Naive thymus-derived CD4-positive, alpha-beta T cell (primary cell): ENCODE measurements at regions of chr1 and their contacts with region 1.

Region 1: DNA sequence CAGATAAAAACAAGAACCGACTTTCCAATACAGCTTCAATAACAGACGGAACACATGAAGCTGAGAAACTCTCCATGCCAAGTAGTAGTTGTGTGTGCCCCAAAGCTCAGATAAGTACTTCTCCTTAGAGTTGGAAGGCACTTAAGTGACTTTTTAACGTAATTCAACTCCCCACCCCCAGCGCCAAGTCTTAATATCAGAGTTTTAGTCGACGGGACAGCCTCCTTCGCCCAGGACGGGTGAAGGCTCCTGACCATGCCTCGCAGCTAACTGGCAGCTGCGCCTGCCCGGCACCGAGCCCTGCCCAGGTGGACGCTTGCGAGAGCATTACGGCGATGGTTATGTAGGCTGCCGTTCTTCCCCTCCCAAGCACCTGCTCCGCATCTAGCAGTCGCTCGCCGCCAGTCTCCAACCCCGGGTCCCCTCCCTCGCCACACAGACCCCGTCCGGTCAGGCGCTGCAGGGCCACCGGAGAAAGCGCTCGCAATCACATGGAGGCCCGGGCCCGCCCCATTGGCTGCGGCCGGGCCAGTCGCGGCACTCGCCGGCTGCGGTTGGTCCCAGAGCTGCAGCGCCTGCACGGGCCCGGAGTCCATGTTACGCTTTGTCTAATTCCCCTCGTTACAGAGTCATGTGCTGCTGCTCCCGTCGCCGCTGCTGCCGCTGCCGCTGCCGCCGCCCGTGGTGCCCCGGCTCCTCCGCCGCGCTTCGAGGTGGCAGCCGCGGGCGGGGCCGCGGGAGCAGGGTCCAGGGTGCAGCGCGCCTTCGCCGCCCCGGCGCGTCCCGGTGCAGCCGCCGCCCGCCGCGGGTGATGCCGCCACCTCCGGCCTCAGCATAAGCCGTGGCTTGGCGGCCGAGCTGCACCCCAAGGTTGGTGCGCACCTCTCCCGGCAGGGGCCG is at the start of gene LRRC8D:
- DNase-seq: peak; percentile 46 to 80 (median 57)
- ATAC-seq: peak; percentile 84
- H3K4me3 ChIP-seq: peak within 1 kb of the TSS; percentile 84
- H3K4me3 Mint-ChIP-seq: peak within 1 kb of the TSS; percentile 85 to 97 (median 89)
- H3K27ac ChIP-seq: peak within 1 kb of the TSS; percentile 66
- H3K27ac Mint-ChIP-seq: peak within 1 kb of the TSS; percentile 67 to 92 (median 81)
- H3K4me1 ChIP-seq: peaks cover 7 to 14% of the 10 kb centered on the region in 2 donors
- H3K4me1 Mint-ChIP-seq: peaks cover 20 to 44% (median 36%) of the 10 kb centered on the region in 7 donors
- H3K27me3 ChIP-seq: no peaks in the 10 kb centered on the region
- H3K27me3 Mint-ChIP-seq: peaks cover 0 to 20% (median 0%) of the 10 kb centered on the region in 5 donors
- total RNA-seq, gene LRRC8D: 21.1 to 42.6 (median 37.3) TPM

Region 2: DNA sequence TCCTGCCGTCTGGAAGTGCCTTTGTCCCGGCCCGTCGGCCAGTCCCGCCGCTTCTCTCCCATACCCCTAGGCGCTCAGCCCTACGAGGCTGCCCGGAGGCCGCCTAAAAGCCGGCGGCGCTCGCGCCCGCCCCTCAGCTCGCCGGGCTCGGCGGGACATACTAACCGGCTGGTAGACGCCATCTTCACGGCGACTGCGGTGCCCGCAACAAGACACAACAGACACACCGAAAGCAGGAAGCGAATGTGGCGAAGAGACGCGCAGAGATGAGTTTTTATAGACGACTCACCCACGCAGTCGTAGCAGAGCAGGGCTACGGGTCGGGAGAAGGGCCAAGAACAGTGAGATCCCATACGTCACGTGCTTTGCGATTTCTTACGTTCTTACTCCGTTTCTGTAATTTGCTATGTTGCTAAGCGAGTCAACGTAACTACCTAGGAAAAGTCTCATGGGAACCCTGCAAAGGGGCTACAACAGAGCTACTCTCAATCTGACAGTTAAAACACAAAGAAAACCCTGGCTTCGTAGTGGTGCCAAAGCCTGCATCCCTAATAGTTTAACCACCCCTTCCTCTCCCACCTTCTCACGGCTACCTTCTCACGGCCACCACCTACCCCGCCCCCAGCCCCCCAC is 929.2 kb before region 1 on chr1 and contains the start of gene GTF2B:
- CTCF ChIA-PET with region 1: no interaction called
- POLR2A ChIA-PET with region 1: interaction called, 3 read pairs
- intact Hi-C with region 1: loop called in 1 of 2 experiments (anchors 5 kb)
- DNase-seq: peak; percentile 86 to 96 (median 94)
- ATAC-seq: peak; percentile 97
- H3K4me3 ChIP-seq: peak within 1 kb of the TSS; percentile 86
- H3K4me3 Mint-ChIP-seq: peak within 1 kb of the TSS; percentile 87 to 99 (median 95)
- H3K27ac ChIP-seq: peak within 1 kb of the TSS; percentile 91
- H3K27ac Mint-ChIP-seq: peak within 1 kb of the TSS; percentile 93 to 98 (median 97)
- H3K4me1 ChIP-seq: peaks cover 26 to 27% of the 10 kb centered on the region in 2 donors
- H3K4me1 Mint-ChIP-seq: peaks cover 23 to 59% (median 48%) of the 10 kb centered on the region in 7 donors
- H3K27me3 ChIP-seq: no peaks in the 10 kb centered on the region
- H3K27me3 Mint-ChIP-seq: peaks cover 0 to 2% (median 0%) of the 10 kb centered on the region in 5 donors
- total RNA-seq, gene GTF2B: 41.3 to 53.6 (median 47.3) TPM

Region 3: GRCh38 chr1:89804642-89805237 is 15.9 kb before region 1 on chr1:
- CTCF ChIA-PET with region 1: no interaction called
- POLR2A ChIA-PET with region 1: interaction called, 3 read pairs
- intact Hi-C with region 1: loop called in 1 of 2 experiments (anchors 1 kb)
- DNase-seq: peak; percentile 64 to 83 (median 80)
- ATAC-seq: peak; percentile 98
- H3K4me3 ChIP-seq: no peak overlapping the region
- H3K4me3 Mint-ChIP-seq: no peak overlapping the region
- H3K27ac ChIP-seq: no peak overlapping the region
- H3K27ac Mint-ChIP-seq: no peak overlapping the region
- H3K4me1 ChIP-seq: no peaks in the 10 kb centered on the region
- H3K4me1 Mint-ChIP-seq: peaks cover 0 to 6% (median 0%) of the 10 kb centered on the region in 7 donors
- H3K27me3 ChIP-seq: no peaks in the 10 kb centered on the region
- H3K27me3 Mint-ChIP-seq: peaks cover 0 to 7% (median 0%) of the 10 kb centered on the region in 5 donors

Region 4: GRCh38 chr1:89855413-89856123 is 34.9 kb after region 1 on chr1:
- CTCF ChIA-PET with region 1: no interaction called
- POLR2A ChIA-PET with region 1: no interaction called
- intact Hi-C with region 1: loop called in 1 of 2 experiments (anchors 5 kb)
- DNase-seq: peak in 7 of 9 donors; percentile 45 to 80 (median 67)
- ATAC-seq: peak; percentile 91
- H3K4me3 ChIP-seq: peak overlapping the region; percentile 2
- H3K4me3 Mint-ChIP-seq: peak overlapping the region in 5 of 10 donors; percentile 35 to 87 (median 53)
- H3K27ac ChIP-seq: peak overlapping the region; percentile 72
- H3K27ac Mint-ChIP-seq: no peak overlapping the region
- H3K4me1 ChIP-seq: peaks cover 21 to 29% of the 10 kb centered on the region in 2 donors
- H3K4me1 Mint-ChIP-seq: peaks cover 6 to 31% (median 8%) of the 10 kb centered on the region in 7 donors
- H3K27me3 ChIP-seq: no peaks in the 10 kb centered on the region
- H3K27me3 Mint-ChIP-seq: no peaks in the 10 kb centered on the region

Region 5: DNA sequence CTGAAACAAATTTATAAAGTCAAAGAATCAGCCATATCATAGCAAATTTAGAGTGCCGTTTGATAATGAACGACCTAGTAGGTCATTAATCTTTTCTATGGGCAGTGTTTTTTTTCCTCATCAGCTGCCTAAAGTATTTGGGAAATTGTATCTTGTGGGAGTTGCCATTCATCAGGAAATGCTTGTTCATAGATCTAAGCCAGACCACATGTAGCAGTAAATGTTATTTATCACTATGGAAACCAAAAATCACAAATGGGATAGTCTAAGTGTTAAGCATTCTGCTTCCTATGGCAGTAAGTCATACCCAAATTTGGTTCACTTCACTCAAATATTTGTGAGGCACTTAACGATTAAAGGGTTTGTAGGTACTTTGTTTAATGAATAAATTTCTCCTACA is 53.1 kb after region 1 on chr1:
- CTCF ChIA-PET with region 1: no interaction called
- POLR2A ChIA-PET with region 1: interaction called, 3 read pairs
- intact Hi-C with region 1: loop called in 1 of 2 experiments (anchors 2 kb)
- DNase-seq: peak in 2 of 9 donors; percentile 32 to 33
- ATAC-seq: peak; percentile 49
- H3K4me3 ChIP-seq: no peak overlapping the region
- H3K4me3 Mint-ChIP-seq: peak overlapping the region in 1 of 10 donors; percentile 26
- H3K27ac ChIP-seq: no peak overlapping the region
- H3K27ac Mint-ChIP-seq: peak overlapping the region in 5 of 9 donors; percentile 11 to 84 (median 73)
- H3K4me1 ChIP-seq: peaks cover 5 to 21% of the 10 kb centered on the region in 2 donors
- H3K4me1 Mint-ChIP-seq: peaks cover 27 to 89% (median 73%) of the 10 kb centered on the region in 7 donors
- H3K27me3 ChIP-seq: no peaks in the 10 kb centered on the region
- H3K27me3 Mint-ChIP-seq: no peaks in the 10 kb centered on the region

Region 6: DNA sequence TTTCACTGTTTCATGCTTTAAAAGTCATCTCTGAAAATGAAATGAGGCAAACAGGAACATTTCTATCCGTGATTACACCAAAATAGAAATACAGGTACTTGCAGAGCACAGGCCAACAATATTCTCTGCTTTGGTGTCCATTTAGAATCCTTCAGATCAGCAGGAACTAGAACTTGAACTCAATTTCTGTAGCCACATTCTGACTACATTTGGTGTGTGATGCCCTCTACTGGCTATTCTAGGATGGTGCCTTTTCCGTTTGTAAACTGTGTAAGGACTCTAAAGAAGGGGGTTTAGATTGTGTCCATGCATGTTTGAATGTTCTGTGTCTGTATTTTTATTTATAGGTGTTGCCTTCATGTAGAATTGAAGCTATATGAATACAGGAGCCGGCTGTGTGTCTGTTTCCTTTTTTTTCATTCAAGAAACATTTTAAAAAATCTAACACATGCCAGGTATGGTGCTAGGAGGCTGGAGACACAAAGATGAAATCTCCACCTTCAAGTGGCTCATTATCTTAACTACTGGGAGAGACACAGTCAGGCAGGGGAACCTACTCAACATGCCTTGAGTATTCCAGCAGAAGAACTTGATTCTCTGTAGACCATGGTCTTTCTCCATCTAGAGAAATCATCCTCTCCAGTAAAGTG is 166.6 kb after region 1 on chr1:
- CTCF ChIA-PET with region 1: interaction called, 4 read pairs
- POLR2A ChIA-PET with region 1: interaction called, 5 read pairs
- intact Hi-C with region 1: loop called in 1 of 2 experiments (anchors 1 kb)
- DNase-seq: peak in 8 of 9 donors; percentile 48 to 76 (median 70)
- ATAC-seq: peak; percentile 97
- H3K4me3 ChIP-seq: no peak overlapping the region
- H3K4me3 Mint-ChIP-seq: no peak overlapping the region
- H3K27ac ChIP-seq: no peak overlapping the region
- H3K27ac Mint-ChIP-seq: no peak overlapping the region
- H3K4me1 ChIP-seq: no peaks in the 10 kb centered on the region
- H3K4me1 Mint-ChIP-seq: no peaks in the 10 kb centered on the region
- H3K27me3 ChIP-seq: no peaks in the 10 kb centered on the region
- H3K27me3 Mint-ChIP-seq: peaks cover 0 to 13% (median 4%) of the 10 kb centered on the region in 5 donors

Region 7: GRCh38 chr1:89994805-89995597 is 174.3 kb after region 1 on chr1 and contains the start of gene ZNF326:
- CTCF ChIA-PET with region 1: no interaction called
- POLR2A ChIA-PET with region 1: no interaction called
- intact Hi-C with region 1: loop called (anchors 1 kb)
- DNase-seq: peak; percentile 88 to 99 (median 93)
- ATAC-seq: peak; percentile 98
- H3K4me3 ChIP-seq: peak within 1 kb of the TSS; percentile 86
- H3K4me3 Mint-ChIP-seq: peak within 1 kb of the TSS; percentile 91 to 100 (median 99)
- H3K27ac ChIP-seq: peak within 1 kb of the TSS; percentile 85
- H3K27ac Mint-ChIP-seq: peak within 1 kb of the TSS; percentile 90 to 98 (median 96)
- H3K4me1 ChIP-seq: peaks cover 8 to 14% of the 10 kb centered on the region in 2 donors
- H3K4me1 Mint-ChIP-seq: peaks cover 28 to 47% (median 43%) of the 10 kb centered on the region in 7 donors
- H3K27me3 ChIP-seq: no peaks in the 10 kb centered on the region
- H3K27me3 Mint-ChIP-seq: peaks cover 0 to 7% (median 4%) of the 10 kb centered on the region in 5 donors
- total RNA-seq, gene ZNF326: 17.3 to 52.5 (median 23.5) TPM